Mammary epithelial cell (primary cell): ENCODE measurements at regions of chr1 and their contacts with region 1.

Region 1: GRCh38 chr1:16498573-16499413 is 15.3 kb downstream of the RNU1-1 start:
- DNase-seq: peak; percentile 71
- H3K4me3 ChIP-seq: peak overlapping the region; percentile 40 to 72 (median 64)
- H3K27ac ChIP-seq: no peak overlapping the region
- H3K4me1 ChIP-seq: peaks cover 9% of the 10 kb centered on the region
- H3K27me3 ChIP-seq: no peaks in the 10 kb centered on the region
- CTCF ChIP-seq: no peak

Region 2: GRCh38 chr1:16440470-16441281 is 58.1 kb before region 1 on chr1 and contains the start of gene NECAP2:
- CTCF ChIA-PET with region 1: no interaction called
- dilution Hi-C with region 1: no loop called
- in situ Hi-C with region 1: no loop called
- intact Hi-C with region 1: loop called (anchors 5 kb)
- DNase-seq: peak; percentile 80
- H3K4me3 ChIP-seq: peak within 1 kb of the TSS; percentile 76 to 99 (median 76)
- H3K27ac ChIP-seq: peak within 1 kb of the TSS; percentile 79
- H3K4me1 ChIP-seq: peaks cover 5% of the 10 kb centered on the region
- H3K27me3 ChIP-seq: no peaks in the 10 kb centered on the region
- CTCF ChIP-seq: peak; percentile 59 to 78
- total RNA-seq, gene NECAP2: 55.1 to 75.8 TPM

Region 3: GRCh38 chr1:16464903-16465625 is 33.7 kb before region 1 on chr1:
- CTCF ChIA-PET with region 1: no interaction called
- dilution Hi-C with region 1: loop called (anchors 5 kb)
- in situ Hi-C with region 1: no loop called
- intact Hi-C with region 1: no loop called
- DNase-seq: no peak
- H3K4me3 ChIP-seq: no peak overlapping the region
- H3K27ac ChIP-seq: no peak overlapping the region
- H3K4me1 ChIP-seq: no peaks in the 10 kb centered on the region
- H3K27me3 ChIP-seq: no peaks in the 10 kb centered on the region
- CTCF ChIP-seq: no peak